A673 (cell line): ENCODE measurements at regions of chr2 and their contacts with region 1.

Region 1: GRCh38 chr2:47429795-47430194 is 26.8 kb downstream of the MSH2 start:
- DNase-seq: no peak
- H3K4me3 ChIP-seq: no peak overlapping the region
- H3K27ac ChIP-seq: no peak overlapping the region
- H3K4me1 ChIP-seq: no peaks in the 10 kb centered on the region
- H3K27me3 ChIP-seq: no peaks in the 10 kb centered on the region
- CTCF ChIP-seq: no peak

Region 2: DNA sequence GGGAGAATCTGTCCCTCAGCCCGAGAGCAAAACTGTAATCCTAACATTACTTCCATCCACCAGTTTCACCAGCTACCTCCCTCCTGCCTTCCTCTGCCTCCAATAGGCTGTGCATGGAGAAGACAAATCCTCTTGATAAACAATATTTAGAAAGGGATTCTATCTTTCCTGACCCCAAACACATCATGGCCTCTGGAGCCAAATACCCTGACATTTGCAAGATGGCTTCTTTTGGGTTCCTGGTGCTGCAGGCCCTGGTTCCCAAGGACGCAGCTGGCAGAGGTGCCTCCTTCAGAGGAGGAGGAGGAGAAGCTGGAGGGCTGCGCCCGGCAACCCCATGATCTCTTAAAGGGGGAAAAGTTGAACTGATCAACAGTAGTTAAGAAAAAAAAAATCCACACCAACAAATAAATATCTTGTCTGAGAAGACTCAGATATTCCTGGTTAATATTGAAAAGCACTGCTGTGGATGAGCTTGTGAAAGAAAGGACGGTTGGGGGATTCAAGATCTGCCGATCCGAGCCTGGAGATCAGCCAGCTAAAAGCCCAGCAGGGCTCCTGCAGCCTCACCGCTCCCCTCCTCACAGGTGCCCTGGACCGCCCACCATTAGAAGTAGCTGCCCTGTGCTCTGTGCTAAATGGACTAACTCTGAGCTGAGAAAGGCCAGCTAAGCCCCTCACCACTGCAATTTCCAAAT is 90.0 kb after region 1 on chr2:
- CTCF ChIA-PET with region 1: no interaction called
- POLR2A ChIA-PET with region 1: interaction called, 15 read pairs
- intact Hi-C with region 1: no loop called
- DNase-seq: no peak
- H3K4me3 ChIP-seq: no peak overlapping the region
- H3K27ac ChIP-seq: no peak overlapping the region
- H3K4me1 ChIP-seq: peaks cover 9% of the 10 kb centered on the region
- H3K27me3 ChIP-seq: no peaks in the 10 kb centered on the region
- CTCF ChIP-seq: no peak